SK-N-SH (cell line): ENCODE measurements at regions of chr1 and their contacts with region 1.

Region 1: DNA sequence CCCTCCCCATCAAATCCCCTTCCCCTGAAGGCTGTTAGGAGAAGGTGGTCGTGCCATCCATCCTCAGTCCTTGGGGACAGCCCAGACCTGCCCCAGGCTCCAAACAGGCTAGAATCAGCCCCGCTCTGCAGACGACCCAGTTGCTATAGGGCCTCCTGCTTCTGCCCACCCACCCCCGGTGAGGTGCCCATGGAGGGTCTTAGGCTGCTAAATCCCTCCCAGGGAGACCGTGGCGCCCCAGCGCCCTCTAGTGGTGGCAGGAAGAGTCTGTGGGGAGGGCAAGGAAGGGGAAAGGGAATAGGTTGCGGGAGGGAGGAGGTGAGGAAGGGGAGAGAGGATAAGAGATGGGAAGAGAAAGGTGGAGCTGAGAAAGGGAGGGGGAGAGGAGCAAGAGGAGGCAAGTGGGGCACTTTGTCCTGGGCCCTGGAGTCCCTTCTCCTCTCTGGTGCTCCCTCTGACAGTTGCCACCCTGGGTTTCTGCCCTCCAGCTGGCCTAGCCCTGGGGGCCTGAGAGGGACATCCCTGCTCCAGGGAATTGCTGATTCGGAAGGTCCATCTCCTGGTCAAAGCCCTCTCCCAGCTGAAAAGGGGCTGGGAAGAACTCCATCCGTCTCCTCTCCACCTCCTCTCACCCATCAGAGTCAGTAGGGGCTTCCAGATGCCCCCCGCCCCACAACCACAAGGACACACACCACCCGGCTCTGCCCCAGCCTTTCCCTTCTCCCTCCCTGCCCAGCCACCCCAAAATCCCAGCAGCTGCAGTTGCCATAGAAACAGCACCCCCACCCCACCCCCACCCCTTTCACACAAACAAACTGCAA is 55.4 kb downstream of the CAMK2N1 start:
- DNase-seq: peak; percentile 86
- H3K4me3 ChIP-seq: peak overlapping the region in 1 of 2 experiments; percentile 43; a peak in 1 of 4 replicates
- H3K27ac ChIP-seq: no peak overlapping the region
- H3K4me1 ChIP-seq: no peaks in the 10 kb centered on the region; a peak in 2 of 4 replicates
- H3K27me3 ChIP-seq: no peaks in the 10 kb centered on the region
- CTCF ChIP-seq: peak; percentile 81
- EP300 ChIP-seq: no peak
- RAD21 ChIP-seq: peak; percentile 88

Region 2: DNA sequence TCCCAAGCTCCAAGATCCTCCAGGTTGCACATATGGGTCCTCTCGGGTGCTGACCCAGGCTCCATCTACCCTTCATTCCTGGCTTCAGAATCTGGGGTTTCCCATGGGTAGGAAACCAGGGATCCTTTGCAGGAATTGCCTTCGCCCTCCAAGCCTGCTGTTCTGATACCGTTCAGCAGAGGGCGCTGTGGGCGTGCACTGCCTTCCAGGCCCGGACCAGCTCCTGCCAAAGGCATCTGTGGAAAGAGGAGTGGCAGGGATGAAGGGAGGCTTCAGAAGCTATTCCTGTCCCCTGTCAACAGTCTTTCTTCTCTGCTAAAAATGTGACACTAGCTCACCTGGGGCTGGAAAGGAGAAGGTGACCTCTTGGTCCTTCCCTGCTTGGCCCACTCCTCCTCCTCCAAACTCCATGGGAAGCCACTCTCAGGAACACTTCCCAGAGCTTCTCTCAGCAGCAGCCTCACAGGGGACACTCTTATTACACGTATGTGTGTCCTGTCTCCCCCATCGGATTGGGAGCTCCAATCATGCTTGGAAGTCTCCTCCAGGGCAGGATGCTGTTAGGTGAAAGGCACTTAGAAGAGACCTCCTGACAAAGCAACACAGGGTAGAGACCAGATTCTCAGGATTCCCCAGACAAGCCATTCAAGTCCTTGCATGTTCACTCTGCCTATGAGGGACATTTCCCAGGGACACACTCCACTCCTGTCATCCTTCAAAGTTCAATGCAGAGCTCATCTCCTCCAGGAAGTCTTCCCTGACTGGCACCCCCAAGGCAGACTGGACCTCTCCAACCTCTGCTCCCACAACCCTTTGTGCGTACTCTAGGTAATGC is 68.5 kb before region 1 on chr1:
- CTCF ChIA-PET with region 1: interaction called, 67 read pairs
- POLR2A ChIA-PET with region 1: no interaction called
- DNase-seq: peak; percentile 79
- H3K4me3 ChIP-seq: no peak overlapping the region; a peak in 1 of 4 replicates
- H3K27ac ChIP-seq: no peak overlapping the region
- H3K4me1 ChIP-seq: peaks cover 0 to 19% of the 10 kb centered on the region in 2 experiments; a peak in 2 of 4 replicates
- H3K27me3 ChIP-seq: peaks cover 27% of the 10 kb centered on the region
- CTCF ChIP-seq: peak; percentile 70
- EP300 ChIP-seq: no peak
- RAD21 ChIP-seq: peak; percentile 77

Region 3: GRCh38 chr1:20376880-20377494 is 53.6 kb before region 1 on chr1:
- CTCF ChIA-PET with region 1: interaction called, 31 read pairs
- POLR2A ChIA-PET with region 1: no interaction called
- DNase-seq: peak; percentile 75
- H3K4me3 ChIP-seq: no peak overlapping the region
- H3K27ac ChIP-seq: no peak overlapping the region
- H3K4me1 ChIP-seq: no peaks in the 10 kb centered on the region; a peak in 1 of 4 replicates
- H3K27me3 ChIP-seq: no peaks in the 10 kb centered on the region
- CTCF ChIP-seq: peak; percentile 76
- EP300 ChIP-seq: no peak
- RAD21 ChIP-seq: peak; percentile 70

Region 4: GRCh38 chr1:20416706-20417105 is 13.9 kb before region 1 on chr1:
- CTCF ChIA-PET with region 1: interaction called, 43 read pairs
- POLR2A ChIA-PET with region 1: no interaction called
- DNase-seq: no peak
- H3K4me3 ChIP-seq: no peak overlapping the region
- H3K27ac ChIP-seq: no peak overlapping the region
- H3K4me1 ChIP-seq: peaks cover 2 to 8% of the 10 kb centered on the region in 2 experiments; a peak in 3 of 4 replicates
- H3K27me3 ChIP-seq: no peaks in the 10 kb centered on the region
- CTCF ChIP-seq: no peak
- EP300 ChIP-seq: no peak
- RAD21 ChIP-seq: no peak

Region 5: DNA sequence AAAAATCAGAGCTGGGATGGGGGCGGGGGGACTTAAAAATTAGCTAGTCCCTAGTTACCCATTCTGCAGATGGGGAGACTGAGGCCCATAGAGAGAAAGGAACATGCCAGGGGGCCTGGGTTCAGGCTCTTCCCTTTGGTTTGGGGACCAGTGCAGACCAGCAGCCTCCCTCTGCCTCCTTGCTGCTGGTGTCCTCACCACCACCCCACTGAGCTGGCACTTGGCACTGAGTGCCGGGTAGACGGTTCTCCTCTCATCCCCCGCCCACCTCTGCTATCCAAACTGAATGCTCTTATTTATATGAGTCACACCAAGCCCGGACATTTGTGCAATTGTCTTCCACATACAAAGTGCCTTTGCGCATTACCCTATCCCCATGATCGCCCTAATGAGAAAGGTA is 16.2 kb after region 1 on chr1:
- CTCF ChIA-PET with region 1: interaction called, 16 read pairs
- POLR2A ChIA-PET with region 1: no interaction called
- DNase-seq: no peak
- H3K4me3 ChIP-seq: no peak overlapping the region
- H3K27ac ChIP-seq: no peak overlapping the region
- H3K4me1 ChIP-seq: peaks cover 0 to 7% of the 10 kb centered on the region in 2 experiments; a peak in 1 of 4 replicates
- H3K27me3 ChIP-seq: no peaks in the 10 kb centered on the region
- CTCF ChIP-seq: no peak
- EP300 ChIP-seq: no peak
- RAD21 ChIP-seq: no peak

Region 6: GRCh38 chr1:20485527-20486456 is 55.2 kb after region 1 on chr1 and contains the start of gene CAMK2N1:
- CTCF ChIA-PET with region 1: interaction called, 97 read pairs
- POLR2A ChIA-PET with region 1: no interaction called
- DNase-seq: peak; percentile 89
- H3K4me3 ChIP-seq: peak within 1 kb of the TSS; percentile 68 to 74
- H3K27ac ChIP-seq: peak within 1 kb of the TSS; percentile 56 to 88
- H3K4me1 ChIP-seq: peaks cover 0 to 25% of the 10 kb centered on the region in 2 experiments; a peak in 2 of 4 replicates
- H3K27me3 ChIP-seq: 0 out of 2 replicates have a peak, but pooled peaks cover 3% of the 10 kb centered on the region
- CTCF ChIP-seq: no peak
- EP300 ChIP-seq: no peak
- RAD21 ChIP-seq: no peak
- polyA plus RNA-seq, gene CAMK2N1: 2.8 and 5.3 TPM in 2 replicates

Region 7: DNA sequence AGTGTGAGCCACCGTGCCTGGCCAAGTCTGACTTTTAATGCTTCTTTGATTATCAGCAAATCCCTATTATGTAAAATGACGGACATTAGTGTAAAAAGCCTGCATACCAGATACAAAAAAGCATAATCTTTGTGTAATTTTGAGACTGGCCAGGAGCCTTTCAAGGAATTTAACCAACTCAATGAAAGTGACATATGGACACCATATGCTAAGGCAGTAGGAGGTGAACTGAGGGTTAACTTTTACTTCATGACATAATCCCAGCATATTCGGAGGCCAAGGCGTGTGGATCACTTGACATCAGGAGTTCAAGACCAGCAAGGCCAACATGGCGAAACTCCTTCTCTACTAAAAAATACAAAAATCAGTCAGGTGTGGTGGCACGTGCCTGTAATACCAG is 651.5 kb after region 1 on chr1:
- CTCF ChIA-PET with region 1: no interaction called
- POLR2A ChIA-PET with region 1: no interaction called
- DNase-seq: no peak
- H3K4me3 ChIP-seq: no peak overlapping the region
- H3K27ac ChIP-seq: no peak overlapping the region
- H3K4me1 ChIP-seq: peaks cover 0 to under 1% of the 10 kb centered on the region in 2 experiments; a peak in 1 of 4 replicates
- H3K27me3 ChIP-seq: no peaks in the 10 kb centered on the region
- CTCF ChIP-seq: no peak
- EP300 ChIP-seq: no peak
- RAD21 ChIP-seq: no peak